Activated T-helper 1 cell treated with anti-CD3 and anti-CD28 coated beads, Interleukin-12 subunit alpha, Interleukin-12 subunit beta, Interleukin-2, Interleukin-4 antibody, amounts not matched to agents 30 ng/mL and 10 ng/mL and 1 ng/mL, durations not matched to agents 14 hours and 24 hours and 36 hours (primary cell): ENCODE measurements at regions of chr11 and their contacts with region 1.

Region 1: GRCh38 chr11:67482825-67483798 is at the start of gene AIP:
- DNase-seq: peak; percentile 98
- H3K4me3 Mint-ChIP-seq: peak within 1 kb of the TSS; percentile 94
- H3K27ac Mint-ChIP-seq: peak within 1 kb of the TSS; percentile 100
- H3K4me1 Mint-ChIP-seq: peaks cover 55% of the 10 kb centered on the region
- H3K27me3 Mint-ChIP-seq: peaks cover 4% of the 10 kb centered on the region
- total RNA-seq, gene AIP: 200 and 203 TPM in 2 replicates

Region 2: DNA sequence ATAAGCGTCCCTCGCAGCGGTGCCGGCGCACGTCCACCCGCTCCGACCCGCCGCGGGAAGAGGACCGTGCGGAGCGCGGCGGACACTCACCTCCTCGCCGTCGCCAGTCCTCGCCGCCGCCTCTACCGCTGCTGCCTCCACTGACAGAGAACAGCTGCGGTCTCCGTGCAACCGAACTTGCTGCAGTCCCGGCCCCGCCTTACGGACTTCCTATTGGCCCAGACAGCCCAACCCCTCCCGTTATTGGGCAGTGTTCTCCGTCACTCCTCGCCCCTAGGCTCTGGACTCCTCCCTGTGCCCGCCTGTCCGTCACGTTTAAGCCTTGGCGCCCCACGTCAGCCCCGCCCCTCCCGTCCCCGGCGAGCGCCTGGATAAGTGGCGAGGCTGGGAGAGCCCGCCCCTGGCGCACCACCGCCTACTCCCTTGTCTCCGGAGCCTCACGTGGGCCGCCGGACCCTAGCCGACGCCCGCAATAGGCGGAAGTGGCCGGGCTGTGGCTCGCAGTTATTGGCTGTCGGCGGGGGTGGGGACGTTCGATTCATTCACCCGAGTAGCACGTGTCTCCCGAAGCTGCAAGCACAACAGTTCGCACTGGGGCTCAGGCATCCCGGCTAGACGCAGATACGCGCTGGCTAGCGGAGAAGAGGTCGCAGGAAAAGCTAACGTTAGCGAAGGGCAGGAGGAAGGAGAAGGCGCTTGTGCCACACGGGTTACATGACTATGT is 524.7 kb before region 1 on chr11 and contains the start of gene PC:
- intact Hi-C with region 1: loop called (anchors 5 kb)
- DNase-seq: peak; percentile 97
- H3K4me3 Mint-ChIP-seq: peak within 1 kb of the TSS; percentile 83
- H3K27ac Mint-ChIP-seq: peak within 1 kb of the TSS; percentile 90
- H3K4me1 Mint-ChIP-seq: peaks cover 29% of the 10 kb centered on the region
- H3K27me3 Mint-ChIP-seq: peaks cover 16% of the 10 kb centered on the region
- total RNA-seq, gene PC: 11.2 and 15.9 TPM in 2 replicates

Region 3: DNA sequence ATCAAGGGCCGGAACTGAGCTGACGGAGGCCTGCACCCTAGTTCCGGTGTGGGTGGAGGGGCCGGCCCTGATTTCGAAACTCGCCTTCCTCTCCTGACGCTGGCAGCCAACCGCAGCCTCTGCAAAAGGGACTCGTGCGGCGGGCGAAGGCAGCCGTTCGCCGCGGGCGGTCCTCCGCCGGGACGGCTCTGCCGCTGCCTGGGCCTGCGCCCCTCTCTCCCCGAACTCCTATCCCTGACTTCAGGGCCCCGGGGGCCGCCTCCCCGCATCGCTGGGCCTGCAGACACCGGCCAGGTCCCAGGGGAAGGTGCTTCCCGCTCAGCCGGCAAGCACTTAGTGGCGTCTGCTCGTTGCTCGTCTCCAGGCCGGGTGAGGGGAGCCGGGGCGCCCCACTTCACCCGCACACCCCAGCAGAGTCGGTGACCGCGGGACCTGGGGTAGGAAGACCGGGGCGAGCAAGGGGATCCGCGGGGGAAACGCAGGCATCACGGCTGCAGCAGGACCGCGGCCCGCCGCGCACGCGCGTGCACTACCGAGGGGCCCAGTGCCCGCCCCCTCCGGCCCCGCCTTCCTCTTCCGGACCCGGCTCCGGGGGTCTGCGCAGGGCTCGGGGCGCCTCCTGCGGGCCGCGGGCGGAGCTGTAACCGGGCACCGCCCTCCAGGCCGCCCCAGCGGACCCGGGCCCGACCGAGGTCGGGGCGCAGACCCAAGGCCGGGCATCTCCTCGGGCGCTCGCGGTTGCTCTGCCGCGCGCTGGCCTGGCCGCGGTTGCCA is 194.5 kb before region 1 on chr11:
- intact Hi-C with region 1: loop called (anchors 2 kb)
- DNase-seq: peak; percentile 88
- H3K4me3 Mint-ChIP-seq: peak overlapping the region; percentile 77
- H3K27ac Mint-ChIP-seq: peak overlapping the region; percentile 97
- H3K4me1 Mint-ChIP-seq: peaks cover 36% of the 10 kb centered on the region
- H3K27me3 Mint-ChIP-seq: peaks cover 2% of the 10 kb centered on the region

Region 4: DNA sequence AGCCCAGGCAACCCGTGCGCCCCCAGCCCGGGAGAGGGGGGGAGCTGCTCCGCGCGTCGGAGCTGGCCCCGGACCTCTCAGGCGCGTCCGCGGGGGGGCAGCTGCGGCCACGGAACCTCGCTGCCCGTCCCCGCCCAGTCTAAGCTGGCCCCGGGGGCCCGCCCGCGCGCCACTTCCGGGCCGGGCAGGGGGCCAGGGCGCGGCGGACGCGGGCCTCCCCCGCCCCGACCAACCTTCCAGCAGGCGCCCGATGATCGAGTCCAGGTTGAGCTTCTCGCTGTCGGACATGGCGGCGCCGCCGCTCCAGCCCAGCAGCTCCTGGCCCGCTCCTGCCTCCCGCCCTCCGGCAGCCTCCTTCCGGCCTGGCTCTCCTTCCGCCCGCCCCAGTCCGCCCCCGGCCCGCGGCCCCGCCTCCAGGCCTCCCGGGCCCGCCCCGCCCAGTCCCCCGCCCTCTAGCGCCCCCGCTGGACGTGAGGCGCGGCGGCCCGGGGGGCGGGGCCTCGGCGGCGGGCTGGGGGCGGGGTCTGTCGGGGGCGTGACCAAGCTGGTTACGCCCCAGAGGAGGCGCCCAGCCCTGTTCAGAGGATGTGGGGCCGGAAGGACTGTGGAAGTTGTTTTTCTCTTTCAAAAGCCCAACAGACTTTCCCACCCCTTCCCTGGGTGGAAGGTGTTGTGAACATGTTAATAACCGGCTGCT is 81.5 kb before region 1 on chr11 and contains the start of gene PPP1CA:
- intact Hi-C with region 1: loop called (anchors 1 kb)
- DNase-seq: peak; percentile 87
- H3K4me3 Mint-ChIP-seq: peak within 1 kb of the TSS; percentile 92
- H3K27ac Mint-ChIP-seq: peak within 1 kb of the TSS; percentile 86
- H3K4me1 Mint-ChIP-seq: peaks cover 50% of the 10 kb centered on the region
- H3K27me3 Mint-ChIP-seq: no peaks in the 10 kb centered on the region
- total RNA-seq, gene PPP1CA: 260 and 263 TPM in 2 replicates

Region 5: DNA sequence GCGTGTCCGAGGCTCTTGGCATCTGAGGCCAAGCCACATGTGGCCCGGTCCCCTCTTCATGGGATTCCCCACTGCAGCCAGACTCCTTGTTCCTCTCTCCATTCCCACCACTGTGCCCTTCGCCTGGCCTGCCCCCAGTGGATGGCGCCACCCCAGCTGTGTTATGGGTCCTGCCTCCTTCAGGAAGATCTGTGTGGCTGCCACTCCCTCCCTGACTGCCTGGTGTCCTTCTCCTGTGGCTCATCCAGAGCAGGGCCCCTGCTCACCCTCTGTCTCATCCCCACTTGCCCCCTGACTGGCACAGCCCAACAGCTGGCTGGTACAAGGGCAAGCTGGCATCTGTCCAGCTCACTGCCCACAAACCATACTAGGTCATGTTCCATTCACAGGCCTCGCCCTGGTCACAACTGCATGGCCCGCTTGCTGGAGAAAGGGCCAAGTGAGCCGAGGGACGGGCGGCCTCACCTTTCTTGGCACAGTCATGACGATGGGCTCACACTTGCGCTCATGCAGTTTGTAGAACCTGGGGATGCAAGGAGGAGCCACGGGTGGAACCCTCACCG is 43.7 kb before region 1 on chr11:
- intact Hi-C with region 1: loop called (anchors 2 kb)
- DNase-seq: peak; percentile 24
- H3K4me3 Mint-ChIP-seq: peak overlapping the region; percentile 90
- H3K27ac Mint-ChIP-seq: peak overlapping the region; percentile 97
- H3K4me1 Mint-ChIP-seq: peaks cover 33% of the 10 kb centered on the region
- H3K27me3 Mint-ChIP-seq: no peaks in the 10 kb centered on the region